Naive thymus-derived CD4-positive, alpha-beta T cell (primary cell): ENCODE measurements at regions of chr15 and their contacts with region 1.

Region 1: DNA sequence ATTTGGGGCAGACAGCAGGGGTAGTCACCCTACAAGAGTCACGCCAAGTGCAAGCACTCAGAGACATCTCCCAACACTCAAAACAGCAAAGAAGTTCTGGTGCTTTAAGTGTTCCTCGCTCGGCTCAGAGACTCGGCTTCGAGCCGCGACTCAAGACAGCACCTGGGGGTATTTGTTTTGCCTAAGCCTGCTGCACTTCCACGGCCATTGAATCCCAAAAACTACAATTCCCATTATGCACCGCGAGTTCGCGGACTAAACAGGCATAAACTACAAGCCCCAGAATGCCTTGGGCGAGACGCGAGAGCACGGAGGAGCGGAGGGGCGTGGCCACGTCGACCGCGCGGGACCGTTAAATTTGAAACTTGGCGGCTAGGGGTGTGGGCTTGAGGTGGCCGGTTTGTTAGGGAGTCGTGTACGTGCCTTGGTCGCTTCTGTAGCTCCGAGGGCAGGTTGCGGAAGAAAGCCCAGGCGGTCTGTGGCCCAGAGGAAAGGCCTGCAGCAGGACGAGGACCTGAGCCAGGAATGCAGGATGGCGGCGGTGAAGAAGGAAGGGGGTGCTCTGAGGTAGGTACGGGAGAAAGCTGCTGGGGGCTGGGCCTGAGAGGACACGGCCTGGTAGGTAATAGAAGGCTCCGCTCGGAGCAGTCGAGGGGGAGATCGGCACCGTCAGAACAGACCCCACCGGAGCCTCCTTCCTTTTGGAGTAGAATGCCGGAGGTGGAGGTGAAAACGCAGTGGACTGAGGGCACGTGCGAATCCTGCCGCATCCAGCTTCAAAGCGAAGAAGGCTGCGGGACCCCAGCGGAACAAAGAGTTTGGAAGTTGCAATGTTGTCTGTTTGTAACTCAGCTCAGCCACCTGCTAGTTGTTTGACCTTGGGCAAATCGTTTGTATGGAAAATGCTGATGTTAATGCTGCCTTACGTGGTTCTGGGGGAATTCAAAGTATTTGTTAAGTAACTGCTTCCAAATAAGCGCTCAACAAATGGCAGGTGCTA is at the start of gene BUB1B:
- DNase-seq: peak; percentile 79 to 94 (median 92)
- ATAC-seq: peak; percentile 100
- H3K4me3 ChIP-seq: peak within 1 kb of the TSS; percentile 80
- H3K4me3 Mint-ChIP-seq: peak within 1 kb of the TSS in 2 of 10 donors; percentile 15 to 51
- H3K27ac ChIP-seq: peak within 1 kb of the TSS; percentile 29
- H3K27ac Mint-ChIP-seq: no peak within 1 kb of the TSS
- H3K4me1 ChIP-seq: peaks cover 0 to 7% of the 10 kb centered on the region in 2 donors
- H3K4me1 Mint-ChIP-seq: peaks cover 0 to 12% (median 0%) of the 10 kb centered on the region in 7 donors
- H3K27me3 ChIP-seq: no peaks in the 10 kb centered on the region
- H3K27me3 Mint-ChIP-seq: no peaks in the 10 kb centered on the region
- total RNA-seq, gene BUB1B: 0.41 to 55.7 (median 1.2) TPM

Region 2: DNA sequence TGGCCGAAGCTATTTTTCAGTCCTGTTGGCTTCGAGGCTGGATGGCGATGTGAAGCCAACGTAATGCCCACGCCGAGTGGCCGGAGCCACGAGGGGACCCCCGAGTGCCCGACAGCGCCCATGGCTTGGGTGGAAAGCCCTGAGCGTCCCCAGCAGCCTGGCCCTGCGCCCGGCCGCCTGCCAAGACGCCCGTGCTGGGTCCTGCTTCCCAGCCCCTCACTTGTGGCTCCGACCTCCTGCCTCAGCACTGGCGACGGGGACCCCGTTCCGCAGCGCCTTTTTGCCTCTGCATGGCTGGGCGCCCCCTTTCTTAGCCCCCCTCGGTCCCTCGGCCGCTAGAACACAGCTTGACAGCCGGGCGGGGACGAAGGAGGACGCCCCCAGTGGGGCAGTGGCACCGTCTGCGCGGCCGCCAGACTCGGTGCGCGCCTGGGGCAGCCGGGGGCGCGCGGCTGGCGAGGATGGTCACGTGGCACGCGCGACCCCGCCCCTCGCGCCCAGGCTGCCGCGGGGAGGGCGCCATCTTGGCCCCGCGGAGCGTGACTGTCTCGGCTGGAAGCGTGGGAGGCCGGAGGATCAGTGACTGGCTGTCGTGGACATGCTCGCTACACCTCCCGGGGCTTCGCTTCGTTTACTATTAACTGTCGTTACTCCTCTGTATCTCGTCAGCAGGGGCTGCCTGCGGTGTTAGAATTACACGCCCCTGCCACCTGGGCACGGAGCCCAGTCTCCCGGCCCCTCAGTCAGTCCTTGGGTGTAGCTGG is 240.3 kb before region 1 on chr15:
- CTCF ChIA-PET with region 1: no interaction called
- POLR2A ChIA-PET with region 1: no interaction called
- intact Hi-C with region 1: loop called in 1 of 2 experiments (anchors 2 kb)
- DNase-seq: peak; percentile 58 to 86 (median 73)
- ATAC-seq: peak; percentile 97
- H3K4me3 ChIP-seq: peak overlapping the region; percentile 80
- H3K4me3 Mint-ChIP-seq: peak overlapping the region; percentile 75 to 92 (median 88)
- H3K27ac ChIP-seq: no peak overlapping the region
- H3K27ac Mint-ChIP-seq: peak overlapping the region in 8 of 9 donors; percentile 43 to 90 (median 77)
- H3K4me1 ChIP-seq: peaks cover 0 to 5% of the 10 kb centered on the region in 2 donors
- H3K4me1 Mint-ChIP-seq: peaks cover 6 to 29% (median 12%) of the 10 kb centered on the region in 7 donors
- H3K27me3 ChIP-seq: peaks cover 5 to 15% of the 10 kb centered on the region in 2 donors
- H3K27me3 Mint-ChIP-seq: peaks cover 14 to 32% (median 23%) of the 10 kb centered on the region in 5 donors

Region 3: GRCh38 chr15:39934397-39935071 is 226.5 kb before region 1 on chr15:
- CTCF ChIA-PET with region 1: no interaction called
- POLR2A ChIA-PET with region 1: no interaction called
- intact Hi-C with region 1: loop called in 1 of 2 experiments (anchors 2 kb)
- DNase-seq: peak in 5 of 9 donors; percentile 5 to 14 (median 9)
- ATAC-seq: no peak
- H3K4me3 ChIP-seq: peak overlapping the region; percentile 76
- H3K4me3 Mint-ChIP-seq: peak overlapping the region; percentile 86 to 95 (median 89)
- H3K27ac ChIP-seq: peak overlapping the region; percentile 78
- H3K27ac Mint-ChIP-seq: peak overlapping the region; percentile 20 to 91 (median 64)
- H3K4me1 ChIP-seq: peaks cover 14 to 16% of the 10 kb centered on the region in 2 donors
- H3K4me1 Mint-ChIP-seq: peaks cover 28 to 50% (median 33%) of the 10 kb centered on the region in 7 donors
- H3K27me3 ChIP-seq: no peaks in the 10 kb centered on the region
- H3K27me3 Mint-ChIP-seq: peaks cover 0 to 6% (median 0%) of the 10 kb centered on the region in 5 donors

Region 4: GRCh38 chr15:40038638-40039543 is 122.1 kb before region 1 on chr15 and contains the start of gene SRP14:
- CTCF ChIA-PET with region 1: interaction called, 4 read pairs
- POLR2A ChIA-PET with region 1: no interaction called
- intact Hi-C with region 1: loop called (anchors 1 kb)
- DNase-seq: peak; percentile 74 to 93 (median 87)
- ATAC-seq: peak; percentile 98
- H3K4me3 ChIP-seq: peak within 1 kb of the TSS; percentile 86
- H3K4me3 Mint-ChIP-seq: peak within 1 kb of the TSS; percentile 92 to 100 (median 100)
- H3K27ac ChIP-seq: peak within 1 kb of the TSS; percentile 96
- H3K27ac Mint-ChIP-seq: peak within 1 kb of the TSS; percentile 94 to 99 (median 98)
- H3K4me1 ChIP-seq: peaks cover 15 to 18% of the 10 kb centered on the region in 2 donors
- H3K4me1 Mint-ChIP-seq: peaks cover 28 to 58% (median 53%) of the 10 kb centered on the region in 7 donors
- H3K27me3 ChIP-seq: no peaks in the 10 kb centered on the region
- H3K27me3 Mint-ChIP-seq: no peaks in the 10 kb centered on the region
- total RNA-seq, gene SRP14: 92.1 to 157 (median 111) TPM

Region 5: DNA sequence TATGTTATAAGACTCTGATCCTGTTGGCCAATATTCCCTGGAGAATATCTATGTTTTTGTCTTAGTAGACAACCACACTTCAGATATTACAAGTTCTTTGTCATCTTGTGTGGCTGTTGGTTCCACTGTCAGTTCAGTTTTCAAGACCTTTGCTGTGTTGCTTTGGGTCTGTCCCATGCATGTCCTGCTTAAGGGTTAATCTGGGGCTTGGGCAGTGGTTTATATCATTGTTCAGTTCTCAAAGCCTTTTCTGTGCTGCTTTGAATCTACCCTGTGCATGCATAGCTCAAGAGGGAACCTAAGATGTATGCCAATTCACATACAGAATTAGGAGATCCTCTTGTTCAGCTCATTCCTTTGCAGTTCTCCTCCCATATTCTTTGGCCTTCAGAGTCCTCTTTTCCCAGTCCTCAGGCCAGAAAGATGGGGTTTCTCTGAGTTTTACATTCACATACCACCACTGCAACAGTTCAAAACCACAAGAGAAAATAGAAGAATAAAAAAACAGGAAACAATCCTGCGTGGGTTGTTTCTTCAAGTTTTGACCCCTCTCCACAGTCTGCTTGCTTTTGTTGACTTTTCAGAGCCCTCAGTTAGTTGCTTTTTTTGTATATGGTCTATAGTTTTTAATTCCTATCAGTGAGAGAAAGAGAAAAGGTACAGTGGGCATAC is 21.5 kb after region 1 on chr15:
- CTCF ChIA-PET with region 1: no interaction called
- POLR2A ChIA-PET with region 1: no interaction called
- intact Hi-C with region 1: loop called in 1 of 2 experiments (anchors 2 kb)
- DNase-seq: no peak
- ATAC-seq: no peak
- H3K4me3 ChIP-seq: peak overlapping the region; percentile 2
- H3K4me3 Mint-ChIP-seq: peak overlapping the region in 8 of 10 donors; percentile 2 to 77 (median 24)
- H3K27ac ChIP-seq: no peak overlapping the region
- H3K27ac Mint-ChIP-seq: peak overlapping the region in 7 of 9 donors; percentile 1 to 90 (median 43)
- H3K4me1 ChIP-seq: peaks cover 17 to 22% of the 10 kb centered on the region in 2 donors
- H3K4me1 Mint-ChIP-seq: peaks cover 19 to 43% (median 21%) of the 10 kb centered on the region in 7 donors
- H3K27me3 ChIP-seq: no peaks in the 10 kb centered on the region
- H3K27me3 Mint-ChIP-seq: no peaks in the 10 kb centered on the region